Mammary epithelial cell (primary cell): ENCODE measurements at regions of chr1 and their contacts with region 1.

Region 1: GRCh38 chr1:52601991-52602855 is at the start of gene GPX7:
- DNase-seq: no peak
- H3K4me3 ChIP-seq: peak within 1 kb of the TSS in 2 of 3 experiments; percentile 23 to 35
- H3K27ac ChIP-seq: no peak within 1 kb of the TSS
- H3K4me1 ChIP-seq: peaks cover 10% of the 10 kb centered on the region
- H3K27me3 ChIP-seq: no peaks in the 10 kb centered on the region
- CTCF ChIP-seq: no peak
- total RNA-seq, gene GPX7: 1.5 to 23.5 TPM

Region 2: DNA sequence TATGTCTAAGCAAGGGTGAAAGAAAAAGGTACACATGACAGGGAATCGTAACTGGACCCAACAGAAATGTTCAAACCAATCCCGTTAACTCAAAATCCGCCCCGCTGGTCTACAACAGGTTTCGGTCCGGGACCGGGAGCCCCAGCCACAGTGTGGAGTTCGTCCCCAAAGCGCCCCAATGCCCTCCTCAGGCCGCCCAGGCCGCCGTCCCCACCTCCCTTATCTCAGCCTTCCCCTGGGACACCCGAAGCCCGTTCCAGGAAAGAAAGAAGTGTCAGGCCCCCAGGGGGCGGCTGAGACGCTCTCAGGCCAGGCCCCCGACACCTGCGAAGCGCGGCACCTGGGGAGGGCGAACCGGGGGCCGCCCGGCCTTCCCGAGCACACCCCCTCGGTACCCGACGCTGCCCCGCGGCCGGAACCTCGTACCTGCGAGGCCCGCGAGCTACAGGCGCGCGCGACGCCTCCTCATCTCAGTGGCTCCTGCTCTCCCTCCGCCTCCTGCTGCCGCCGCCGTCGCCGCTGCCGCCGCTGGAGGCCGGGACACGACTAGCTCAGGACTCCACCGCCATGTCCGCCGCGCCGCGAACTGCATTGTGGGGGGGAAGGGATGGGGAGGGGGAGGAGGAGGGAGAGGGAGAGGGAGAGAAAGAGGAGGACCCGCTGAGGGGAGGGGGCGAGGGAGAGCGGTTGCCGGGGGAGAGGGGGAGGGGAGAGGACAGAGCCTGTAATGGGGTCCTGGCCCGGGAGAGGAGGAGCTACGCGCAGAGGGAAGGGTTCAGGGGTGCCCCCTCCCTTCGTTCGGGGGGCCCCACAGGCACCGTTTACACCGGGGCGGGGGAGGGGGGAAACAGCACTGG is 49.5 kb before region 1 on chr1 and contains the start of gene TUT4:
- CTCF ChIA-PET with region 1: no interaction called
- dilution Hi-C with region 1: no loop called
- in situ Hi-C with region 1: no loop called
- intact Hi-C with region 1: loop called (anchors 2 kb)
- DNase-seq: peak; percentile 74
- H3K4me3 ChIP-seq: peak within 1 kb of the TSS; percentile 84 to 95 (median 89)
- H3K27ac ChIP-seq: peak within 1 kb of the TSS; percentile 95
- H3K4me1 ChIP-seq: peaks cover 24% of the 10 kb centered on the region
- H3K27me3 ChIP-seq: no peaks in the 10 kb centered on the region
- CTCF ChIP-seq: peak in 1 of 2 donors; percentile 9
- total RNA-seq, gene TUT4: 30.5 to 47.9 TPM

Region 3: DNA sequence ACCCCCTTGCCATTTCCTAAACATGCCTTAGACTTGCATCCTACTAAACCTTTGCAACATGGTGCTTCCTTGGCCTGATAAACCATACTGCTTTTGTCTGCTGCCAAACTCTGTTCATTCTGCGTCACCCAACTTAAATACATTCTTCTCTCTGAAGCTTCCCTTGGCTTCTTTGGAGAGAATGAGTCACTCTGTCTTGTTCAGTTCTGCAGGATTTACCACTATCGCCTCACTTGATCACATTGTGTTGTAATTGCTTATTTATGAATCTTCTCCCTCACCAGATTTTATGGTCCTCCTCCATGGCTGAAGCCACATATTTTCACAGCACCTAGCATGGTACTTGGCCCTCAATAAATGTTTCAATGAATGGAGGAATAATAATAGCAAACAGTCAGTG is 27.6 kb before region 1 on chr1:
- CTCF ChIA-PET with region 1: no interaction called
- dilution Hi-C with region 1: loop called (anchors 5 kb)
- in situ Hi-C with region 1: no loop called
- intact Hi-C with region 1: no loop called
- DNase-seq: peak; percentile 95
- H3K4me3 ChIP-seq: no peak overlapping the region
- H3K27ac ChIP-seq: peak overlapping the region; percentile 9
- H3K4me1 ChIP-seq: peaks cover 16% of the 10 kb centered on the region
- H3K27me3 ChIP-seq: no peaks in the 10 kb centered on the region
- CTCF ChIP-seq: no peak